CD14-positive monocyte (primary cell): ENCODE measurements at regions of chr11 and their contacts with region 1.

Region 1: DNA sequence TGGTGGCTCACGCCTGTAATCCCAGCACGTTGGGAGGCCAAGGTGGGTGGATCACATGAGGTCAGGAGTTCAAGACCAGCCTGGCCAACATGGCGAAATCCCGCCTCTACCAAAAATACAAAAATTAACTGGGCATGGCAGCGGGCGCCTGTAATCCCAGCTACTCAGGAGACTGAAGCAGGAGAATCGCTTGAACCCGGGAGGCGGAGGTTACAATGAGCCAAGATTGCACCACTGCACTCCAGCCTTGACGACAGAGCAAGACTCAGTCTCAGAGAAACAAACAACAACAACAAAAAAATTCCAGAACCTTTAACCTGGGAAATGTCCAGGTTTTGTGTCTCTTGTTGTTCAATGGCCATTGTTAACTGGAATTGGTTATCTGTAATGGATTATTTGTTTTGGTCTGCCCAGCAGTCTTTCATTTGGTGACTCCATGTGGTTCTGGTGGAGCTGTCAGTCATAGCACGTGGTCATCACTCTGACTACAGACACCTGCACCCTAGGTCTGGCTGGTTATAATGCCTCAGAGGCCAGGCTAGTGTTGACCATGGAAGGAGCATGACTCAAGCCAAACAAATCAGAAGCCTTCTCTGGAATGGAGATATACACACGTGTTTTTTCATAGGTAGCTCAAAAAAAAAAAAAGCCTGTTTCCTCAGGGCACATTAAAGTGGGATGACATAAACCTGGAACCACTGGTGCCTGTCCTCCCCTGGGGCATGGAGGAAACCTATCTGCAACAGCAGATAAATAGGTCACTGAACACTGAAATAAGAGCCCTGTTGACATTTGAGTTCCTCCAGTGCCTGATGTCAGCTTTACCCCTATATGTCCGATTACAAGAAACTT is 7.9 kb upstream of the PLAAT3 start:
- DNase-seq: no peak
- H3K4me3 ChIP-seq: no peak overlapping the region
- H3K4me3 Mint-ChIP-seq: no peak overlapping the region
- H3K27ac ChIP-seq: peak overlapping the region in 1 of 2 donors; percentile 38
- H3K27ac Mint-ChIP-seq: peak overlapping the region in 6 of 7 donors; percentile 18 to 96 (median 42)
- H3K4me1 ChIP-seq: peaks cover 30 to 67% of the 10 kb centered on the region in 2 donors
- H3K4me1 Mint-ChIP-seq: peaks cover 48% of the 10 kb centered on the region
- H3K27me3 ChIP-seq: no peaks in the 10 kb centered on the region
- H3K27me3 Mint-ChIP-seq: peaks cover 0 to 3% (median 2%) of the 10 kb centered on the region in 3 donors
- CTCF ChIP-seq: no peak

Region 2: GRCh38 chr11:63508009-63508408 is 114.1 kb before region 1 on chr11:
- intact Hi-C with region 1: loop called in 1 of 2 experiments (anchors 10 kb)
- DNase-seq: peak; percentile 59 to 68 (median 65)
- H3K4me3 ChIP-seq: peak overlapping the region in 1 of 3 experiments; percentile 79
- H3K4me3 Mint-ChIP-seq: peak overlapping the region in 1 of 2 donors; percentile 93
- H3K27ac ChIP-seq: no peak overlapping the region
- H3K27ac Mint-ChIP-seq: peak overlapping the region; percentile 15 to 90 (median 83)
- H3K4me1 ChIP-seq: peaks cover 60 to 61% of the 10 kb centered on the region in 2 donors
- H3K4me1 Mint-ChIP-seq: peaks cover 58% of the 10 kb centered on the region
- H3K27me3 ChIP-seq: no peaks in the 10 kb centered on the region
- H3K27me3 Mint-ChIP-seq: peaks cover 0 to 2% (median 0%) of the 10 kb centered on the region in 3 donors
- CTCF ChIP-seq: peak; percentile 45

Region 3: GRCh38 chr11:63567044-63567840 is 54.9 kb before region 1 on chr11:
- intact Hi-C with region 1: loop called (anchors 5 kb)
- DNase-seq: peak; percentile 95 to 97 (median 96)
- H3K4me3 ChIP-seq: peak overlapping the region in 1 of 3 experiments; percentile 43
- H3K4me3 Mint-ChIP-seq: peak overlapping the region in 1 of 2 donors; percentile 85
- H3K27ac ChIP-seq: peak overlapping the region; percentile 5 to 94
- H3K27ac Mint-ChIP-seq: peak overlapping the region; percentile 97 to 99 (median 98)
- H3K4me1 ChIP-seq: peaks cover 23 to 25% of the 10 kb centered on the region in 2 donors
- H3K4me1 Mint-ChIP-seq: peaks cover 30% of the 10 kb centered on the region
- H3K27me3 ChIP-seq: no peaks in the 10 kb centered on the region
- H3K27me3 Mint-ChIP-seq: peaks cover 0 to 3% (median 0%) of the 10 kb centered on the region in 3 donors
- CTCF ChIP-seq: no peak

Region 4: GRCh38 chr11:63573881-63574855 is 48.0 kb before region 1 on chr11:
- intact Hi-C with region 1: loop called (anchors 5 kb)
- DNase-seq: peak; percentile 59 to 62 (median 59)
- H3K4me3 ChIP-seq: peak overlapping the region; percentile 22 to 75 (median 65)
- H3K4me3 Mint-ChIP-seq: peak overlapping the region; percentile 83 to 89
- H3K27ac ChIP-seq: peak overlapping the region; percentile 68 to 87
- H3K27ac Mint-ChIP-seq: peak overlapping the region; percentile 84 to 97 (median 94)
- H3K4me1 ChIP-seq: peaks cover 13 to 20% of the 10 kb centered on the region in 2 donors
- H3K4me1 Mint-ChIP-seq: peaks cover 23% of the 10 kb centered on the region
- H3K27me3 ChIP-seq: no peaks in the 10 kb centered on the region
- H3K27me3 Mint-ChIP-seq: peaks cover 2 to 3% (median 3%) of the 10 kb centered on the region in 3 donors
- CTCF ChIP-seq: no peak

Region 5: DNA sequence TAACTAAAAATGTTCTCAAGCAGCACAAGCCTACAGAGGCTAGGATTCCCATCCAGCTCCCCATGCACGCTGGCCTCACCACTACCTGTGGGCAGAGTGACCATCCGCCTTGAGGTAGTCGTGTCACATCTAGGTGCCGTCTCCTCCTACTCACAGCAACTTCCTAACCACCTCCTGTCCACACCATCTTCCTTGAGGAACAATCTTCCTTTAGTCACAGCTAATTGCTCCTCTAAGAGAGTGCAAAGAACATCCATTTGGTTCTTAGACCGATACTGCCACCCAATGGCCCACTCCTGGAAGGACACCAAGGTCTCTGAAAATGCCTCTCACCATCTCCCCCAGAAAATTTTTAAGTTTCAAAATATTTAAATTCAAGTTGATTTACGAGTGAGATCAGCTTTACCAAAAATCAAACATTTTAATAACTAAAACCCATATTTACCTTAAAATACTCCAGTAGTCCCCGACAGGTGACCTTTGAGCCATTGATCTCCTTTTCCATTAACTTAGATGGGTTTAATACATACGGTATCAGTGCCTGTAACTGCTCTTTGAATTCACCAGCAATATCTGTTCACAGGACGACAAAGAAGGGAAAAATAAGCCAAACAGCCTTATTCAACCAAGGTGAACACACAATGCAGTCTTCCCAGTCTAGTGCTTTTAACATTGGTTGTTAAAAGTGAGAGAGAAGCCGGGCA is 13.8 kb after region 1 on chr11:
- intact Hi-C with region 1: loop called in 1 of 2 experiments (anchors 1 kb)
- DNase-seq: peak; percentile 60 to 75 (median 72)
- H3K4me3 ChIP-seq: no peak overlapping the region
- H3K4me3 Mint-ChIP-seq: no peak overlapping the region
- H3K27ac ChIP-seq: no peak overlapping the region
- H3K27ac Mint-ChIP-seq: peak overlapping the region in 6 of 7 donors; percentile 26 to 80 (median 51)
- H3K4me1 ChIP-seq: peaks cover 33 to 40% of the 10 kb centered on the region in 2 donors
- H3K4me1 Mint-ChIP-seq: peaks cover 33% of the 10 kb centered on the region
- H3K27me3 ChIP-seq: no peaks in the 10 kb centered on the region
- H3K27me3 Mint-ChIP-seq: peaks cover 0 to 3% (median 0%) of the 10 kb centered on the region in 3 donors
- CTCF ChIP-seq: peak; percentile 90